Activated CD4-positive, alpha-beta T cell treated with anti-CD3 and anti-CD28 coated beads, Interleukin-2, amount 10 ng/mL, durations not matched to agents 24 days and 14 days (primary cell): ENCODE measurements at regions of chr5 and their contacts with region 1.

Region 1: DNA sequence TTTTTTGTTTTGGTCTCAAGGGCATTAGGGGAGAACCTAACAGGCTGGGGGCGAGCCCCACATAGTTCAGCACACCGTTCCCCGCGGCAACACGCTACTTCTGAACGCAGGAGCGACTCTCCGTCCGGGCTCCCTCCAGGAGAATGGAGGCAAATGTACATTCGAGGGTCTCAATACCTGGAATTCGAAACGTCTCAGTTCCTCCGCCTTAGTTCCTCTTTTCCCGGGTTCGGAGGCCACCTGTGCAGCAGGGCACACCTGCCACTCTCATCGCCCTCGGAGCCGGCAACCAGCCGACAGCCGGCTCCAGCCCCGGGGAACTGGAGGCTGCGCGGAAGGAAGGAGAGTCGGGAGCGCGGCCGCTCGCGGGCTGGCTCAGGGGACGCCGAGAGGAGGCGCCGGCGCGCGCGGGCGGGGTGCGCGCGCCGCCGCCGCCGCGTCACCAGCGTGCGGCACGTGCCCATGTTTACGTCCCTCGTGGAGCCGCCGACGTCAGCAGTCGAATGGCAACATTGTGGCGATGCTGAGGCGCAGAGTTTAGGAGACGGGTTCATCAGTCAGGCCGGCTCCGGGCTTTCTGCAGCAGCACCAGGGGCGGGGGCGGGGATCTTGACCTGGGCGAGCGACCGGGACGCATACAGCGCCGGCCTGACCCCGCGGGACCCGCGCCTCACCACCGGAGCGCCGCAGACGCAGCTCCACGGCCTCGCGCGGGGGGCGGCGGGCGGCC is at the start of gene JMY:
- DNase-seq: peak; percentile 94
- H3K4me3 Mint-ChIP-seq: peak within 1 kb of the TSS; percentile 92
- H3K27ac Mint-ChIP-seq: peak within 1 kb of the TSS; percentile 86
- H3K4me1 Mint-ChIP-seq: peaks cover 19% of the 10 kb centered on the region
- H3K27me3 Mint-ChIP-seq: peaks cover 3% of the 10 kb centered on the region
- total RNA-seq, gene JMY: 4.5 and 5.6 TPM in 2 replicates

Region 2: GRCh38 chr5:78359831-78360673 is 875.7 kb before region 1 on chr5 and contains the start of gene SCAMP1:
- intact Hi-C with region 1: loop called (anchors 2 kb)
- DNase-seq: peak; percentile 98
- H3K4me3 Mint-ChIP-seq: peak within 1 kb of the TSS; percentile 97
- H3K27ac Mint-ChIP-seq: peak within 1 kb of the TSS; percentile 98
- H3K4me1 Mint-ChIP-seq: peaks cover 28% of the 10 kb centered on the region
- H3K27me3 Mint-ChIP-seq: no peaks in the 10 kb centered on the region
- total RNA-seq, gene SCAMP1: 20.8 and 23.1 TPM in 2 replicates

Region 3: DNA sequence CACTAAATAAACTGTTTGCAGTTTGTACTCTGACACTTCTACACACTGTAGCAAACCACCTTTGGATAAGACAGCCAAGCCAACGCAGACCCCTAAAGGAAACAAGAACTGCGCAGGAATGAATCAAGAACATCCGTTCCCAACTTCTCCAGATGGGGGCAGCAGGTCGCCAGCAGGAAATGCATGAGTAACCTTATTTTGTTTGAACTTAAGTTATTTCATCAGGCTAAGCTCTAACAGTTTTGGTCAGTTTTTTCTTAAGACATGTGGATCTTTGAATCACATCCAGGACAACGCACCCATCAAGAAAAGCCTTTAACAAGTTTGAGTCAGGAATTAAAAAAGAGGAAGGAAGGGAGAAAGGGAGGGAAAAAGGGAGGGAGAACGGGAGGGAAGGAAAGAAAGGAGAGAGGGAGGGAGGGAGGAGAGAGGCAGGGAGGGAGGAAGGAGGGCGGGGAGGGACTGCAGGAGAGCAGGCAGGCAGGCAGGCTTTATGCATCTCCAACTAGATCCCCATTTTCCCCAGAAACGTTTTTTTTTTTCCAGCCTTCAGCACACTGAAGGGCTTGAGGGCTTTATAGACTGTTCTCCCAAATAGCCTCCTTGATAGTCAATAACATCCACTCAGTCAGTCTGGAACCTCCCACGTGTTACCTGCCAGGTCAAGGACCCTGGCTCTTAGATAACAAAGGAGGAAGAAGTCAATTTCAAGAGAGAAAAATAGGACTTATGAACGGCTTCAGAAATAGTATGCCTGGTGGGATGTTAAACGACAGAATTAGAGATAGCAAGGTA is 101.9 kb before region 1 on chr5:
- intact Hi-C with region 1: loop called (anchors 2 kb)
- DNase-seq: peak; percentile 88
- H3K4me3 Mint-ChIP-seq: peak overlapping the region; percentile 41
- H3K27ac Mint-ChIP-seq: peak overlapping the region; percentile 69
- H3K4me1 Mint-ChIP-seq: peaks cover 5% of the 10 kb centered on the region
- H3K27me3 Mint-ChIP-seq: peaks cover 1% of the 10 kb centered on the region

Region 4: GRCh38 chr5:79612667-79613198 is 376.9 kb after region 1 on chr5:
- intact Hi-C with region 1: loop called (anchors 5 kb)
- DNase-seq: no peak
- H3K4me3 Mint-ChIP-seq: peak overlapping the region; percentile 94
- H3K27ac Mint-ChIP-seq: peak overlapping the region; percentile 97
- H3K4me1 Mint-ChIP-seq: peaks cover 28% of the 10 kb centered on the region
- H3K27me3 Mint-ChIP-seq: no peaks in the 10 kb centered on the region

Region 5: GRCh38 chr5:79962575-79963222 is 726.9 kb after region 1 on chr5:
- intact Hi-C with region 1: loop called (anchors 10 kb)
- DNase-seq: peak; percentile 67
- H3K4me3 Mint-ChIP-seq: peak overlapping the region; percentile 54
- H3K27ac Mint-ChIP-seq: peak overlapping the region; percentile 90
- H3K4me1 Mint-ChIP-seq: peaks cover 25% of the 10 kb centered on the region
- H3K27me3 Mint-ChIP-seq: peaks cover 3% of the 10 kb centered on the region

Region 6: GRCh38 chr5:80754900-80755299 is 1519.1 kb after region 1 on chr5:
- intact Hi-C with region 1: loop called (anchors 5 kb)
- DNase-seq: peak; percentile 79
- H3K4me3 Mint-ChIP-seq: peak overlapping the region; percentile 66
- H3K27ac Mint-ChIP-seq: peak overlapping the region; percentile 96
- H3K4me1 Mint-ChIP-seq: peaks cover 63% of the 10 kb centered on the region
- H3K27me3 Mint-ChIP-seq: no peaks in the 10 kb centered on the region